ENCODE measurements at regions of chr2 and their contacts with region 1.

Region 1: GRCh38 chr2:208040199-208041171 is 15.2 kb upstream of the PLEKHM3 start:
- DNase-seq: peak; percentile 72
- H3K4me3 Mint-ChIP-seq: no peak overlapping the region
- H3K27ac Mint-ChIP-seq: no peak overlapping the region
- H3K4me1 Mint-ChIP-seq: no peaks in the 10 kb centered on the region
- H3K27me3 Mint-ChIP-seq: no peaks in the 10 kb centered on the region
- CTCF ChIP-seq: peak; percentile 57

Region 2: DNA sequence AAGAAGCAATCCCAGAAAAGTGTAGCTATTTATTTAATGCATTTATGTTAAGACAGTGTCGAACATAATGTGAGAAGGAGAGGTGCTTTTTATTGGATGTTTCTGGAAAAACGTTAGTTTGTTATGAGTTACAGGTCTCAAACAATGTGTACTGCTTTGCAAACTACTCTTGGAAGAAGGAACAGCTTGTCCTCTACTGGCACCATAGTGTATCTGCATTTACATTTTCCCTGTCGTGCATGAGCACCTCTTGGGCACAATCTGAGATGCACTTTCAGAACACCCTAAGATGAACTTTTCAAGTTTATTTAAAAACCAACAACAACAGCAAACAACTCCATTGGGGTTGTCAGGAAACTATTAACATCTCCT is 306.2 kb before region 1 on chr2:
- CTCF ChIA-PET with region 1: interaction called, 13 read pairs
- POLR2A ChIA-PET with region 1: no interaction called
- intact Hi-C with region 1: no loop called
- DNase-seq: peak; percentile 43
- H3K4me3 Mint-ChIP-seq: no peak overlapping the region
- H3K27ac Mint-ChIP-seq: no peak overlapping the region
- H3K4me1 Mint-ChIP-seq: peaks cover 5% of the 10 kb centered on the region
- H3K27me3 Mint-ChIP-seq: no peaks in the 10 kb centered on the region
- CTCF ChIP-seq: peak; percentile 26

Region 3: DNA sequence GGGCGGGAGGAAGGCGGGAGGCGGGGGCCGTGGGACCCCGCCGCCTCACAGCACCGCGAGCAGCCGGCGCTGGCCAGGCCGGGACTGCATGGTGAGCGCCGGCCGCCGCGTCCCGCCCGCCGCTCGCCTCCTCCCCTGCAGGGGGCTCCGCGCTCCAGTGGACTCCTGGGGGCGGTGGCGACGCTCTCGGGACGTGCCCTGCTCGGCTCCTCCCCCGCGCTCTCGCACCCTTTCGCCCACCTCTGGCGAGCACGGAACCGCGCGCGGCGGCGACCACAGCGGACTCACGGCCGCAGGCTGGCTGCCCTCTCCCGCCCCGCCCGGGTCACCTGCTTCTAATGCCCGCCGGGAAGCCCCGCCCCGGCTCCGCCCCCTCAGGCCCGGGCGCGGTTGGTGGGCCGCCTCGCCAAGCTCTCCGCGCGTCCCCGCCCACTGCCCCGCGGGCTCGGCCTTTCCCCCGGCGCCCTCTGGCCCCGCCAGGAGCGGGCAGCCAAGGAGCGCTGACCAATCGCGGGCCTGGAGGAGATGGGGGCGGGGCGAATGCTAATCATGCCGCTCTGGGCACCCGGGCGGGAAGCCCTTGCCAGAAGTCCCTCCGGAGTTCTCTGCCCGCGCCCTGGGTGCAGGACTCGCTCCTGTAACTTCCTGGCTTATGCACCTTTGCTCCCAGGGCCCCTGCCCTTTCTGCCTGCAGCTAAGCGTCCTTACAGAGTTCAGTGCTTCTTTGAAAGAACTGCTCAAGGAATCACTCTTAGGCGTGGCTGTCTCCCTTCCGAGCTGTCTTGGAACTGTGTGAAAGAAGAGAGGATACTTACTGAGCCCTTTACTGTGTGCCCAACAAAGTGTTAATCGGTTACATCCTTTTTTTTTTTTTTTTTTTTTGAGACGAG is 270.6 kb before region 1 on chr2 and contains the start of gene FZD5:
- CTCF ChIA-PET with region 1: interaction called, 15 read pairs
- POLR2A ChIA-PET with region 1: no interaction called
- intact Hi-C with region 1: loop called (anchors 1 kb)
- DNase-seq: peak; percentile 95
- H3K4me3 Mint-ChIP-seq: peak within 1 kb of the TSS; percentile 86
- H3K27ac Mint-ChIP-seq: peak within 1 kb of the TSS; percentile 42
- H3K4me1 Mint-ChIP-seq: peaks cover 8% of the 10 kb centered on the region
- H3K27me3 Mint-ChIP-seq: no peaks in the 10 kb centered on the region
- CTCF ChIP-seq: peak; percentile 68
- total RNA-seq, gene FZD5: 2.6 and 4.3 TPM in 2 replicates

Region 4: DNA sequence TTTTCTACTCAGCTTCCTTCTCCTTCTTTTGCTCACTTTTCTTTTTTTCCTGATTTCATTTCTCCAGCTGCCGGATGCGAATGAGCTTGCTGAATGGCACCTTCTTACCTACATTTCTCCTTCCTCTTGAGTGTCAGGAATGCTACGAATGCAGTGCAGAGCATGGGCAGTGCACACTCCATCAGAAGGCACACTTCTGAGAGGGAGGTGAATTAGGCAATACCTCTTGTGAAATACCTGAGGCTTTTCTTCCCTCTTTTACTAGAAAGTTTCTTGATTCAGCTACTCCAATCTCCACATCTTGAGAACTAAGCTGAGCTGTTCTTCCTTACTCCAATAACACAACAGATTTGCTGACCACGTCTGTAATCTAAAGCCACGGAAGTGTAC is 66.3 kb before region 1 on chr2:
- CTCF ChIA-PET with region 1: interaction called, 29 read pairs
- POLR2A ChIA-PET with region 1: no interaction called
- intact Hi-C with region 1: loop called (anchors 2 kb)
- DNase-seq: peak; percentile 57
- H3K4me3 Mint-ChIP-seq: no peak overlapping the region
- H3K27ac Mint-ChIP-seq: no peak overlapping the region
- H3K4me1 Mint-ChIP-seq: peaks cover 6% of the 10 kb centered on the region
- H3K27me3 Mint-ChIP-seq: no peaks in the 10 kb centered on the region
- CTCF ChIP-seq: no peak

Region 5: GRCh38 chr2:208025037-208025813 is 15.3 kb before region 1 on chr2 and contains the start of gene PLEKHM3:
- CTCF ChIA-PET with region 1: interaction called, 22 read pairs
- POLR2A ChIA-PET with region 1: interaction called, 15 read pairs
- intact Hi-C with region 1: no loop called
- DNase-seq: peak; percentile 84
- H3K4me3 Mint-ChIP-seq: peak within 1 kb of the TSS; percentile 78
- H3K27ac Mint-ChIP-seq: peak within 1 kb of the TSS; percentile 87
- H3K4me1 Mint-ChIP-seq: no peaks in the 10 kb centered on the region
- H3K27me3 Mint-ChIP-seq: no peaks in the 10 kb centered on the region
- CTCF ChIP-seq: no peak
- total RNA-seq, gene PLEKHM3: 5.4 and 7.5 TPM in 2 replicates

Region 6: GRCh38 chr2:208062113-208062512 is 21.6 kb after region 1 on chr2:
- CTCF ChIA-PET with region 1: interaction called, 18 read pairs
- POLR2A ChIA-PET with region 1: interaction called, 3 read pairs
- intact Hi-C with region 1: no loop called
- DNase-seq: peak; percentile 50
- H3K4me3 Mint-ChIP-seq: no peak overlapping the region
- H3K27ac Mint-ChIP-seq: no peak overlapping the region
- H3K4me1 Mint-ChIP-seq: peaks cover 7% of the 10 kb centered on the region
- H3K27me3 Mint-ChIP-seq: peaks cover 16% of the 10 kb centered on the region
- CTCF ChIP-seq: no peak

Region 7: GRCh38 chr2:208255557-208256106 is 215.1 kb after region 1 on chr2:
- CTCF ChIA-PET with region 1: no interaction called
- POLR2A ChIA-PET with region 1: no interaction called
- intact Hi-C with region 1: no loop called
- DNase-seq: no peak
- H3K4me3 Mint-ChIP-seq: peak overlapping the region; percentile 83
- H3K27ac Mint-ChIP-seq: peak overlapping the region; percentile 14
- H3K4me1 Mint-ChIP-seq: peaks cover 14% of the 10 kb centered on the region
- H3K27me3 Mint-ChIP-seq: no peaks in the 10 kb centered on the region
- CTCF ChIP-seq: no peak